Activated CD8-positive, alpha-beta T cell treated with anti-CD3 and anti-CD28 coated beads for 36 hours (primary cell): ENCODE measurements at regions of chr3 and their contacts with region 1.

Region 1: DNA sequence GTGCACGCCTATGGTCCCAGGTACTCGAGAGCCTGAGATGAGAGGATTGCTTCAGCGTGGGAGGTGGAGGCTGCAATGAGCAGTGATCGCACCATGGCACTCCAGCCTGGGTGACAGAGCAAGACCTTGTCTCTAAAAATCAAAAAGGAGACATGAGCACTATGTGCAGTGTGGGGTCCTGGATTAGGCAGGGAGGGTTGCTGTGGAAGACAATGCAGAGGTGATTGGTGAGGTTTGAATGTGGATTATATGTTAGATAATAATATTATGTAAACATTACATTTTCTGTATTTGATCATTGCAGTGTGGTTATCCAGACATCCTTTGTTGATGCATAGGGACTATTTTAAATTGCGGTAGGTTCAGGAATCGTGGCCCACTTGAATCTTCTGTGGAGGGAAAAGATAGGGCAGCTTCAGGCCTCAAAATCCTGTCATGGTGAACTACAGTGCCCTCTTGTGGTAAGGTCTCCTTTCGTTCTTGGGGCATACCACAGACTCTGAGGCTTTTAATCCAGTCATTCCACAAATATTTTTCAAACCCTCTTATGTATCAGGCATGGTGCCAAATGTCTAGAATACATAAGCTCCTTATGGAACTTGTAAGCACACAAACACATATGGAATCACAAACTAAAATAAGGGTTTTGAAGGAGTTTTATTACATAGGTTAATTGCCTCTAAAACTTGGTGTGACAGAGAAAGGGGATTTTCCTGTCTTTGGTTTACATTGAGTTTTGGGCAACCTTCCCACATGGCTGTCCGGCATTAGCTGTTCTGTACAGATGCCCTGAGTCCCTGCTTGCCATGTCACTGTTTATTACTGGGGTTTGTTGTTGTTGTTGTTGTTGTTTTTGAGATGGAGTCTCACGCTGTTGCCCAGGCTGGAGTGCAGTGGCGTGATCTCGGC is 37.7 kb downstream of the GPD1L start:
- DNase-seq: peak; percentile 57
- ATAC-seq: peak; percentile 49
- H3K4me3 Mint-ChIP-seq: no peak overlapping the region
- H3K27ac Mint-ChIP-seq: no peak overlapping the region
- H3K4me1 Mint-ChIP-seq: peaks cover 1% of the 10 kb centered on the region
- H3K27me3 Mint-ChIP-seq: no peaks in the 10 kb centered on the region
- CTCF ChIP-seq: peak; percentile 80

Region 2: GRCh38 chr3:32018757-32019564 is 125.1 kb before region 1 on chr3:
- CTCF ChIA-PET with region 1: interaction called, 61 read pairs
- POLR2A ChIA-PET with region 1: no interaction called
- intact Hi-C with region 1: loop called (anchors 1 kb)
- DNase-seq: no peak
- ATAC-seq: no peak
- H3K4me3 Mint-ChIP-seq: no peak overlapping the region
- H3K27ac Mint-ChIP-seq: no peak overlapping the region
- H3K4me1 Mint-ChIP-seq: no peaks in the 10 kb centered on the region
- H3K27me3 Mint-ChIP-seq: peaks cover 2% of the 10 kb centered on the region
- CTCF ChIP-seq: peak; percentile 78

Region 3: DNA sequence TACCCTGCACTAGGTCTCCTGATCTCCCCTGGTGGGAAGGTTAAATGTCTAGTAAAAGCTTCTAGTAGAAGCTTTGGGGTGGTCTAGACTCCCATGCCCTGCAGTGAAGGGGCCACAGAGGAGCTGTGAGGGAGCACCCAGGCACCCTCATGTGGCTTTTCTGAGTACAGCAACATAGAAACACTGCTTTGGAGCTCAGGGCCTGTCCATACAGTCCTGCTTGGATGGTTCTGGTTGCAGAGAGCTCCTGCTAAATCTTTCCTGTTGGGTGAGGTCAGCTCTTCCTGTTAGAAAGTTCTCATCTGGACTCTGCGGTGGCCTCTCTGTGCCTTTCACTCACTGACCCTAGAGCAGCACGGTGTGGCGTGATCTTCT is 10.1 kb after region 1 on chr3:
- CTCF ChIA-PET with region 1: interaction called, 10 read pairs
- POLR2A ChIA-PET with region 1: no interaction called
- intact Hi-C with region 1: no loop called
- DNase-seq: no peak
- ATAC-seq: no peak
- H3K4me3 Mint-ChIP-seq: no peak overlapping the region
- H3K27ac Mint-ChIP-seq: no peak overlapping the region
- H3K4me1 Mint-ChIP-seq: no peaks in the 10 kb centered on the region
- H3K27me3 Mint-ChIP-seq: no peaks in the 10 kb centered on the region
- CTCF ChIP-seq: no peak

Region 4: DNA sequence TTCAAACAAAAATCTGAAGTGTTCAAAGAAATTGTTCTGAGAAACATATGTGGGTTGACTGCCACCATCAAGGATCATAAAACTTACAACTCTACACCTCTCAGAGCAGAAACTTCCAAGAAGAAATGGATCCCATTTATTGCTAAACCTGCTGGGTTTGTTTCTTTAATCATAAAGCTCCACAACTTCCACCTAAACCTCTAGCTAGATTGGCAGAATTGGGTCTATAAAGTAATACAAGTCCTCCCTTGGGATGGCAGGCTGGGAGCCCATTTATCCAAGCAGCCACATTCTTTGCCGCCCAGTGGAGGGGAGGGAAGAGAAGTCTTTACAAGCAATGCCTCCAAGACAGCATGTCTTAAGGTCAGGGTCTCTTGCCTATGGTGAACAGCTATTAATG is 53.9 kb after region 1 on chr3:
- CTCF ChIA-PET with region 1: no interaction called
- POLR2A ChIA-PET with region 1: no interaction called
- intact Hi-C with region 1: no loop called
- DNase-seq: no peak
- ATAC-seq: no peak
- H3K4me3 Mint-ChIP-seq: no peak overlapping the region
- H3K27ac Mint-ChIP-seq: no peak overlapping the region
- H3K4me1 Mint-ChIP-seq: no peaks in the 10 kb centered on the region
- H3K27me3 Mint-ChIP-seq: peaks cover 2% of the 10 kb centered on the region
- CTCF ChIP-seq: no peak

Region 5: GRCh38 chr3:32208447-32208846 is 64.3 kb after region 1 on chr3:
- CTCF ChIA-PET with region 1: no interaction called
- POLR2A ChIA-PET with region 1: no interaction called
- intact Hi-C with region 1: no loop called
- DNase-seq: no peak
- ATAC-seq: no peak
- H3K4me3 Mint-ChIP-seq: no peak overlapping the region
- H3K27ac Mint-ChIP-seq: no peak overlapping the region
- H3K4me1 Mint-ChIP-seq: no peaks in the 10 kb centered on the region
- H3K27me3 Mint-ChIP-seq: peaks cover 3% of the 10 kb centered on the region
- CTCF ChIP-seq: no peak

Region 6: GRCh38 chr3:32237670-32238452 is 93.8 kb after region 1 on chr3:
- CTCF ChIA-PET with region 1: no interaction called
- POLR2A ChIA-PET with region 1: no interaction called
- intact Hi-C with region 1: no loop called
- DNase-seq: peak; percentile 3
- ATAC-seq: no peak
- H3K4me3 Mint-ChIP-seq: peak overlapping the region; percentile 79
- H3K27ac Mint-ChIP-seq: no peak overlapping the region
- H3K4me1 Mint-ChIP-seq: peaks cover 20% of the 10 kb centered on the region
- H3K27me3 Mint-ChIP-seq: peaks cover 18% of the 10 kb centered on the region
- CTCF ChIP-seq: no peak